ENCODE measurements at regions of chr1 and their contacts with region 1.

Region 1: GRCh38 chr1:169546087-169546995 is 39.9 kb downstream of the F5 start:
- DNase-seq: peak; percentile 57
- ATAC-seq: peak; percentile 66
- H3K4me3 Mint-ChIP-seq: no peak overlapping the region
- H3K27ac Mint-ChIP-seq: no peak overlapping the region
- H3K4me1 Mint-ChIP-seq: peaks cover 2% of the 10 kb centered on the region
- H3K27me3 Mint-ChIP-seq: no peaks in the 10 kb centered on the region
- CTCF ChIP-seq: peak; percentile 63

Region 2: GRCh38 chr1:168603501-168604110 is 942.7 kb before region 1 on chr1:
- CTCF ChIA-PET with region 1: interaction called, 10 read pairs
- POLR2A ChIA-PET with region 1: no interaction called
- intact Hi-C with region 1: loop called (anchors 10 kb)
- DNase-seq: peak; percentile 84
- ATAC-seq: peak; percentile 91
- H3K4me3 Mint-ChIP-seq: no peak overlapping the region
- H3K27ac Mint-ChIP-seq: no peak overlapping the region
- H3K4me1 Mint-ChIP-seq: no peaks in the 10 kb centered on the region
- H3K27me3 Mint-ChIP-seq: no peaks in the 10 kb centered on the region
- CTCF ChIP-seq: peak; percentile 55

Region 3: DNA sequence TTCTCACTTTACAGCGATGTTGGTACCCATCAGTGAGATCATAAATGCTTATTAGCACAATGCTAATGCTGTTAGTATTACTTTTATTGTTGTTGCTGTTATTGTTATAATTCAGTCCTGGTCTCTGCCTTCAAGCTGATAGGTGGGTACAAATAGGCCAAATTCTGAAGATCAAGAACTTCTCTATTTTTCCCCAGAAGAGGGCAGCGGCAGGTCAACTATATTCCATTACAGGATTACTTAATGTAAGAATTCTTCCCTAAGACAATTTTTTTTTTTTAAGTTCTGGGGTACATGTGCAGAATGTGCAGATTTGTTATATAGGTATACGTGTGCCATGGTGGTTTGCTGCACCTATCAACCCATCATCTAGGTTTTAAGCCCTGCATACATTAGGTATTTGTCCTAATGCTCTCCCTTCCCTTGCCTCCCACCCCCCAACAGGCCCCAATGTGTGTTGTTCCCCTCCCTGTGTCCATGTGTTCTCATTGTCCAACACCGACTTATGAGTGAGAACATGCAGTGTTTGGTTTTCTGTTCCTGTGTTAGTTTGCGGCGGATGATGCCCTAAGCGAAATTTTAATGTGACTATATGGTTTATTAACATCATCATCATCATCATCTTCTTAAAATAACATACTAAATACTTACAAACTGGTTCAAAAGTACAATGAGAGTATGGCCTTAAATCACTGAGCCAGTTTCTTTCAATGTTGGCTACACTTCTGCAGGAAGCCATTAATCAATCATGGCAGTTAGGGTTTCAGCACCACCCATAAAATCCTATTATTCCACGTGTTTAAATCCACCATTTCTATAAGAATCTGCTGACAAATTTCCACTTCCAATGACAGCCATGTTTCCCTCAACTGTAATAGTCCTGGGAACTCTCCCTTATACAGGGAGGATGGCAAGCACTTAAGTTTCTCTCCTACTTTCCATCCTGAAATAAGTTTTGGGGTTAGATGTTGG is 79.8 kb before region 1 on chr1:
- CTCF ChIA-PET with region 1: interaction called, 3 read pairs
- POLR2A ChIA-PET with region 1: no interaction called
- intact Hi-C with region 1: loop called (anchors 1 kb)
- DNase-seq: peak; percentile 36
- ATAC-seq: no peak
- H3K4me3 Mint-ChIP-seq: no peak overlapping the region
- H3K27ac Mint-ChIP-seq: no peak overlapping the region
- H3K4me1 Mint-ChIP-seq: peaks cover 3% of the 10 kb centered on the region
- H3K27me3 Mint-ChIP-seq: no peaks in the 10 kb centered on the region
- CTCF ChIP-seq: peak; percentile 46

Region 4: GRCh38 chr1:169517586-169518192 is 28.7 kb before region 1 on chr1:
- CTCF ChIA-PET with region 1: no interaction called
- POLR2A ChIA-PET with region 1: no interaction called
- intact Hi-C with region 1: no loop called
- DNase-seq: no peak
- ATAC-seq: no peak
- H3K4me3 Mint-ChIP-seq: no peak overlapping the region
- H3K27ac Mint-ChIP-seq: no peak overlapping the region
- H3K4me1 Mint-ChIP-seq: no peaks in the 10 kb centered on the region
- H3K27me3 Mint-ChIP-seq: no peaks in the 10 kb centered on the region
- CTCF ChIP-seq: no peak

Region 5: DNA sequence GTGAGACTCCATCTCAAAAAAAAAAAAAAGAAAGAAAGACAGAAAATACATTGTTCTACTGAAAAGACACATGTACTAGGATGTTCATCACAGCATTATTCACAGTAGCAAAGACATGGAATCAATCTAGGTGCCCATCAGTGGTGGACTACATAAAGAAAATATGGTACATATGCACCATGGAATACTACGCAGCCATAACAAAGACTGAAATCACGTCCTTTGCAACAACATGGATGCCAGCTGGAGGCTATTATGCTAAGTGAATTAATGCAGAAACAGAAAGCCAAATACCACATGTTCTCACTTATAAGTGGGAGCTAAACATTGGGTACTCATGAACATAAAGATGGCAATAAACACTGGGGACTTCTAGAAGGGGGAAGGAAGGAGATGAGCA is 11.7 kb before region 1 on chr1:
- CTCF ChIA-PET with region 1: interaction called, 11 read pairs
- POLR2A ChIA-PET with region 1: no interaction called
- intact Hi-C with region 1: no loop called
- DNase-seq: no peak
- ATAC-seq: no peak
- H3K4me3 Mint-ChIP-seq: no peak overlapping the region
- H3K27ac Mint-ChIP-seq: no peak overlapping the region
- H3K4me1 Mint-ChIP-seq: no peaks in the 10 kb centered on the region
- H3K27me3 Mint-ChIP-seq: no peaks in the 10 kb centered on the region
- CTCF ChIP-seq: no peak

Region 6: GRCh38 chr1:169560066-169560465 is 13.7 kb after region 1 on chr1:
- CTCF ChIA-PET with region 1: interaction called, 14 read pairs
- POLR2A ChIA-PET with region 1: no interaction called
- intact Hi-C with region 1: no loop called
- DNase-seq: no peak
- ATAC-seq: no peak
- H3K4me3 Mint-ChIP-seq: no peak overlapping the region
- H3K27ac Mint-ChIP-seq: no peak overlapping the region
- H3K4me1 Mint-ChIP-seq: peaks cover 7% of the 10 kb centered on the region
- H3K27me3 Mint-ChIP-seq: no peaks in the 10 kb centered on the region
- CTCF ChIP-seq: no peak

Region 7: GRCh38 chr1:169731446-169731845 is 185.1 kb after region 1 on chr1:
- CTCF ChIA-PET with region 1: no interaction called
- POLR2A ChIA-PET with region 1: no interaction called
- intact Hi-C with region 1: no loop called
- DNase-seq: no peak
- ATAC-seq: no peak
- H3K4me3 Mint-ChIP-seq: no peak overlapping the region
- H3K27ac Mint-ChIP-seq: no peak overlapping the region
- H3K4me1 Mint-ChIP-seq: no peaks in the 10 kb centered on the region
- H3K27me3 Mint-ChIP-seq: peaks cover 5% of the 10 kb centered on the region
- CTCF ChIP-seq: no peak

Region 8: GRCh38 chr1:169809370-169810095 is 263.2 kb after region 1 on chr1:
- CTCF ChIA-PET with region 1: interaction called, 11 read pairs
- POLR2A ChIA-PET with region 1: no interaction called
- intact Hi-C with region 1: no loop called
- DNase-seq: peak; percentile 31
- ATAC-seq: no peak
- H3K4me3 Mint-ChIP-seq: no peak overlapping the region
- H3K27ac Mint-ChIP-seq: no peak overlapping the region
- H3K4me1 Mint-ChIP-seq: no peaks in the 10 kb centered on the region
- H3K27me3 Mint-ChIP-seq: no peaks in the 10 kb centered on the region
- CTCF ChIP-seq: peak; percentile 68

Measured in activated CD8-positive, alpha-beta T cell treated with anti-CD3 and anti-CD28 coated beads for 36 hours (primary cell).